ENCODE measurements at regions of chr13 and their contacts with region 1.

Region 1: GRCh38 chr13:97221989-97222700 is at the start of gene MBNL2:
- DNase-seq: peak; percentile 53 to 93 (median 84)
- ATAC-seq: peak; percentile 97
- H3K4me3 ChIP-seq: peak within 1 kb of the TSS; percentile 80
- H3K4me3 Mint-ChIP-seq: peak within 1 kb of the TSS; percentile 88 to 97 (median 95)
- H3K27ac ChIP-seq: peak within 1 kb of the TSS; percentile 81
- H3K27ac Mint-ChIP-seq: peak within 1 kb of the TSS; percentile 89 to 98 (median 94)
- H3K4me1 ChIP-seq: peaks cover 33 to 34% of the 10 kb centered on the region in 2 donors
- H3K4me1 Mint-ChIP-seq: peaks cover 27 to 56% (median 45%) of the 10 kb centered on the region in 7 donors
- H3K27me3 ChIP-seq: no peaks in the 10 kb centered on the region
- H3K27me3 Mint-ChIP-seq: no peaks in the 10 kb centered on the region
- total RNA-seq, gene MBNL2: 13.4 to 28.6 (median 24.6) TPM

Region 2: DNA sequence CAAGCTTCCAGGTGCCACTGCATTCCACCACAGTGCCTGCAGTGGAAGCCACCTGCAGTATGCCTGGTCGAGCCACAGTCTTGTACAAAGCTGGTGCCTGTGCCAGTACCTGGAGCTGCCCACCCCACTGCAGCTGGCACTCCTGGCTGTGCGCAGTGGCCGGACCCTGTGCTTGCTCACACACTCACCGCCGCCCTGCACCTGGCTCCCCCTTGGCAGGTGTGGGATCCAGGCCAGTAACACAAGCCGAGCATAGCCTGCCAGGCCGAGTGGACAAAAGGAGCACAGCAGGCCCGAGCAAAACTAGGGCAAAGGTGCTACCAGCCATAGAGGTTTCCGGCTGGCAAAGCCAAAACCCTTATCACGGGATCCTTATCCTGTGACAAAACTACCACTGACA is 1187.5 kb before region 1 on chr13:
- CTCF ChIA-PET with region 1: no interaction called
- POLR2A ChIA-PET with region 1: no interaction called
- intact Hi-C with region 1: no loop called
- DNase-seq: no peak
- ATAC-seq: no peak
- H3K4me3 ChIP-seq: no peak overlapping the region
- H3K4me3 Mint-ChIP-seq: no peak overlapping the region
- H3K27ac ChIP-seq: no peak overlapping the region
- H3K27ac Mint-ChIP-seq: no peak overlapping the region
- H3K4me1 ChIP-seq: no peaks in the 10 kb centered on the region
- H3K4me1 Mint-ChIP-seq: no peaks in the 10 kb centered on the region
- H3K27me3 ChIP-seq: no peaks in the 10 kb centered on the region
- H3K27me3 Mint-ChIP-seq: peaks cover 0 to 6% (median 0%) of the 10 kb centered on the region in 5 donors

Region 3: GRCh38 chr13:97043302-97043701 is 178.8 kb before region 1 on chr13:
- CTCF ChIA-PET with region 1: no interaction called
- POLR2A ChIA-PET with region 1: no interaction called
- intact Hi-C with region 1: no loop called
- DNase-seq: no peak
- ATAC-seq: no peak
- H3K4me3 ChIP-seq: no peak overlapping the region
- H3K4me3 Mint-ChIP-seq: no peak overlapping the region
- H3K27ac ChIP-seq: no peak overlapping the region
- H3K27ac Mint-ChIP-seq: no peak overlapping the region
- H3K4me1 ChIP-seq: no peaks in the 10 kb centered on the region
- H3K4me1 Mint-ChIP-seq: no peaks in the 10 kb centered on the region
- H3K27me3 ChIP-seq: no peaks in the 10 kb centered on the region
- H3K27me3 Mint-ChIP-seq: peaks cover 3 to 20% (median 15%) of the 10 kb centered on the region in 5 donors

Region 4: DNA sequence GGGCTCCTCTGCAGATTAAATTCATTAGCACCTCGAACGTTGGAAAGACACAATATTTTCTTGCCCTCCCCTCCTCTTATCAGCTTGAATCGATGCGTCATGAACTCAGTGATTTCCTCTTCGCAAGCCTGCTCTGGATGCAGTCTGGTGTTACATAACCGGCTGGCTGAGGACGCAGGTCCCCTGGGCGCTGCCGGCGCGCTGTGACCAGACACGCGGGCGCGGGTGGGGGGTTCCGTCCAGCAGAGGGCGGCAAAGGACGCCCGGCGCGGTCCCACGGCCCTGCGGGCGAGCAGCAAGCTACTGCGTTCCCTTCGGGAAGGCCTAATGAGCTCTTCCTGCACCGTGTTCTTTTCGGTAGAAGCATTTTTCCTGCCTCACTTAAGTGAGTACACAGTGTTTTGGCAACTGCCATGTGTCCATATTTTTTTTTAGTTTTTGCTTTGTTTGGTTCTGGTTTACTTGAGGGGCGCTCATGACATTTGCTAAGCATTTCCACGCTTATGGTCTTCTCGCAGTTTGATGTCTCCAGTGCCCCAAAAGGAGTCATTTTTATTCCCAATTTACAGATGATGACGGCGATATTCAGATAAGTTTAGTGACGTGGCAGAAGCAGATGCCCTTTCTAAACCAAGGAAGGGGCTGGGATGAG is 112.2 kb before region 1 on chr13:
- CTCF ChIA-PET with region 1: interaction called, 5 read pairs
- POLR2A ChIA-PET with region 1: no interaction called
- intact Hi-C with region 1: loop called (anchors 1 to 10 kb)
- DNase-seq: peak; percentile 59 to 85 (median 76)
- ATAC-seq: peak; percentile 97
- H3K4me3 ChIP-seq: no peak overlapping the region
- H3K4me3 Mint-ChIP-seq: peak overlapping the region in 9 of 10 donors; percentile 19 to 71 (median 45)
- H3K27ac ChIP-seq: no peak overlapping the region
- H3K27ac Mint-ChIP-seq: peak overlapping the region in 1 of 9 donors; percentile 68
- H3K4me1 ChIP-seq: peaks cover 3 to 9% of the 10 kb centered on the region in 2 donors
- H3K4me1 Mint-ChIP-seq: peaks cover 7 to 19% (median 15%) of the 10 kb centered on the region in 7 donors
- H3K27me3 ChIP-seq: no peaks in the 10 kb centered on the region
- H3K27me3 Mint-ChIP-seq: peaks cover 8 to 23% (median 19%) of the 10 kb centered on the region in 5 donors

Region 5: DNA sequence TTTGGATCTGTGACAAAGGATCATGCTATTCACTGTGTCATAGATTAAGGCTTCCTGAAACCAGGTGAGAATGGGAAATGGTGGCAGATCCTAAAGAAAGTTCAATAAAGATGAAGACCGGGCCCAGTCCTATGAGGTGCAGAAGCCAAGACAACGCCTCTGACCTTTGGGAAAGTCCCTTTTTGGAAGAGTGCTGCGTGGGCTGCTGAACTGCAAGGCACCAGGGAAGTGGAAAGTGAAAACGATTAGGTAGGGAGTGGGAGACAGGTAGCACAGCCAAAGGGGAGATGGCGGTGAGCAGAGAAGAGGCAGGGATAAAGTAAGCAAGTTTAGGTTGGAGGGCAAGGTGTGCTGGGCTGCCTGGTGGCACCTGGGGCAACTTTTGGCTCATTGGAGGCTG is 16.3 kb after region 1 on chr13:
- CTCF ChIA-PET with region 1: no interaction called
- POLR2A ChIA-PET with region 1: interaction called, 8 read pairs
- intact Hi-C with region 1: loop called in 1 of 2 experiments (anchors 2 kb)
- DNase-seq: no peak
- ATAC-seq: peak; percentile 33
- H3K4me3 ChIP-seq: no peak overlapping the region
- H3K4me3 Mint-ChIP-seq: no peak overlapping the region
- H3K27ac ChIP-seq: no peak overlapping the region
- H3K27ac Mint-ChIP-seq: peak overlapping the region in 1 of 9 donors; percentile 24
- H3K4me1 ChIP-seq: peaks cover 4 to 19% of the 10 kb centered on the region in 2 donors
- H3K4me1 Mint-ChIP-seq: peaks cover 22 to 93% (median 78%) of the 10 kb centered on the region in 7 donors
- H3K27me3 ChIP-seq: no peaks in the 10 kb centered on the region
- H3K27me3 Mint-ChIP-seq: no peaks in the 10 kb centered on the region

Region 6: GRCh38 chr13:97257800-97258799 is 36.0 kb after region 1 on chr13:
- CTCF ChIA-PET with region 1: interaction called, 3 read pairs
- POLR2A ChIA-PET with region 1: no interaction called
- intact Hi-C with region 1: loop called in 1 of 2 experiments (anchors 1 kb)
- DNase-seq: no peak
- ATAC-seq: peak; percentile 43
- H3K4me3 ChIP-seq: no peak overlapping the region
- H3K4me3 Mint-ChIP-seq: peak overlapping the region in 2 of 10 donors; percentile 31 to 57
- H3K27ac ChIP-seq: no peak overlapping the region
- H3K27ac Mint-ChIP-seq: peak overlapping the region in 2 of 9 donors; percentile 43 to 86
- H3K4me1 ChIP-seq: peaks cover 0 to 25% of the 10 kb centered on the region in 2 donors
- H3K4me1 Mint-ChIP-seq: peaks cover 48 to 72% (median 67%) of the 10 kb centered on the region in 7 donors
- H3K27me3 ChIP-seq: no peaks in the 10 kb centered on the region
- H3K27me3 Mint-ChIP-seq: no peaks in the 10 kb centered on the region

Region 7: DNA sequence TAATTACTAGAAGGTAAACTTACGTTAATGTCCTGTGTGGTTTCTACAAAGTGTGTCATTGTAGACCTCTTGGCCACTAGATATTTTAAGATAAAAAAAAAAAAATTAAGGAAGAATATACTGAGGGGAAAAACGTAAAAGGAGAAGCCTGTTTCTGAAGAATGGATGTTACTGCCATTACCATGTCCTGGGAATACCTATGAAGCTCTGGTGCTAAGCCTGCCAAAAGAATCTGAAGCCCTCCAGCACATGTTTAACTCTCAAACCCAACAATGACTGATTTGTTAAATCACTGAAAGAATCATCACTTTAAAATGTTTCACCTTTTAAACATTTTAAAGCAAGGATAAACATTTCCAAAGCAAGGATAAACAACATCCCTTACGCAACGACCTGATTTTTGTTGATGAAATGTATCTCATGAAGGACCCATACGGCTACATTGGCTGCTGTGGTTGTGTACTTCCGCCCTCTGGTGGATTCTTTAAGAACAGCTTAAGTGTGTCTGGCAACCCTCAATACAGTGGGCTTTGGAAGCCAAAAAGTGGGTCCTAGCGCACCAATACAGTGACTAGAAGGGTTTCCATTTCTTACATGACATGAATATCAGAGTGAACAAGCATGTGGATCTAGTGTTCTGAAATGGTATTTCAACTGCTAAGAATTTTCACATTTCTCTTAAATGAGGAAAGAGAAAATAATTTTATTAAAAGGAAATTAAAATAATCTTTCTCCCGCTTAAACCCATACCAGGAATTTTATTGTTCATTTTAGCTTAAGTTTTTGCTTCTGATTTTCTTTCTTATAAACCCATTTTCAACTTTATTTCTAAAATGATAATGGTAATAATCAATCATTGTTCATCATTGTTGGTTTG is 137.3 kb after region 1 on chr13:
- CTCF ChIA-PET with region 1: no interaction called
- POLR2A ChIA-PET with region 1: interaction called, 5 read pairs
- intact Hi-C with region 1: loop called (anchors 2 to 5 kb)
- DNase-seq: peak in 8 of 9 donors; percentile 24 to 64 (median 54)
- ATAC-seq: peak; percentile 97
- H3K4me3 ChIP-seq: no peak overlapping the region
- H3K4me3 Mint-ChIP-seq: no peak overlapping the region
- H3K27ac ChIP-seq: no peak overlapping the region
- H3K27ac Mint-ChIP-seq: peak overlapping the region in 3 of 9 donors; percentile 3 to 46 (median 22)
- H3K4me1 ChIP-seq: no peaks in the 10 kb centered on the region
- H3K4me1 Mint-ChIP-seq: peaks cover 0 to 4% (median 0%) of the 10 kb centered on the region in 7 donors
- H3K27me3 ChIP-seq: no peaks in the 10 kb centered on the region
- H3K27me3 Mint-ChIP-seq: no peaks in the 10 kb centered on the region

Region 8: DNA sequence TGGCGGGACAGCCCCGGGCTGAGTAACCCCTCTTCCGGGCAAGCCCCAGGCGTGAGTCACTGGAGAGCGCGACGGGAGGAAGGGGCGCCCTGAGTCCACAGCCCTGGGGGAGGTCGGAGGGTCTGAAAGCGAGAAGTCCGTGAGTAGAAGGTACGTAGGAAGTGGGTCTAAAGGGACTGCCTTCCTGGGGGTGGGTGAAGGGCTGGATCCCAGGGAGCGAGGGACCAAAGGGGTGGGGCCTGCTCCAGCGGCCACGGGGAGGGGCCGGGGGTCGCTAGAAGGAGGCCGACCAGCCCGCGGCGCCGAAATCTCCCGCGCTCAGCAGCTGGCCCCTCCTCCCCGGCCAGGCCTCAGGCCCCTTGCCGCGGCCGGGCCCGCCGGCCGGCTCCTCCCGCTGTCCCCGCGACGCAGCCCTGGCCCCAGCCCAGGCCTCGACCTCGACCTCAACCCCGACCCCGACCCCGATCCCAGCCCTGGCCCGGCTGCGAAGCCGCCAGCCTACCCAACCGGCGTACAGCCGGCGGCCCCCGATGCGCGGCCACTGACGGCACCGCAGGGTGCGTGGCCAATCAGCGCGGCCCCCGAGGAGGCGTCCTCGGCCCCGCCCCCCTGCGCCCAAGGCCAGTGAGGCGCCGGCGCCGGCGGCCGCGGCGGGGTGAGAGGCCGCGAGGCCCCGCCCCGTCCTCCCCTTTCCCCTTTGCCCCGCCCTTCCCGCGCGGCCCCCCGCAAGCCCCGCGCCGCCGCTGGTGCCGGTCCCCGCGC is 753.9 kb after region 1 on chr13:
- CTCF ChIA-PET with region 1: no interaction called
- POLR2A ChIA-PET with region 1: no interaction called
- intact Hi-C with region 1: loop called (anchors 5 kb)
- DNase-seq: peak; percentile 53 to 94 (median 88)
- ATAC-seq: peak; percentile 97
- H3K4me3 ChIP-seq: peak overlapping the region; percentile 69
- H3K4me3 Mint-ChIP-seq: peak overlapping the region; percentile 88 to 100 (median 96)
- H3K27ac ChIP-seq: peak overlapping the region; percentile 88
- H3K27ac Mint-ChIP-seq: peak overlapping the region; percentile 90 to 98 (median 96)
- H3K4me1 ChIP-seq: peaks cover 12 to 15% of the 10 kb centered on the region in 2 donors
- H3K4me1 Mint-ChIP-seq: peaks cover 17 to 44% (median 38%) of the 10 kb centered on the region in 7 donors
- H3K27me3 ChIP-seq: no peaks in the 10 kb centered on the region
- H3K27me3 Mint-ChIP-seq: peaks cover 0 to 5% (median 0%) of the 10 kb centered on the region in 5 donors

Region 9: DNA sequence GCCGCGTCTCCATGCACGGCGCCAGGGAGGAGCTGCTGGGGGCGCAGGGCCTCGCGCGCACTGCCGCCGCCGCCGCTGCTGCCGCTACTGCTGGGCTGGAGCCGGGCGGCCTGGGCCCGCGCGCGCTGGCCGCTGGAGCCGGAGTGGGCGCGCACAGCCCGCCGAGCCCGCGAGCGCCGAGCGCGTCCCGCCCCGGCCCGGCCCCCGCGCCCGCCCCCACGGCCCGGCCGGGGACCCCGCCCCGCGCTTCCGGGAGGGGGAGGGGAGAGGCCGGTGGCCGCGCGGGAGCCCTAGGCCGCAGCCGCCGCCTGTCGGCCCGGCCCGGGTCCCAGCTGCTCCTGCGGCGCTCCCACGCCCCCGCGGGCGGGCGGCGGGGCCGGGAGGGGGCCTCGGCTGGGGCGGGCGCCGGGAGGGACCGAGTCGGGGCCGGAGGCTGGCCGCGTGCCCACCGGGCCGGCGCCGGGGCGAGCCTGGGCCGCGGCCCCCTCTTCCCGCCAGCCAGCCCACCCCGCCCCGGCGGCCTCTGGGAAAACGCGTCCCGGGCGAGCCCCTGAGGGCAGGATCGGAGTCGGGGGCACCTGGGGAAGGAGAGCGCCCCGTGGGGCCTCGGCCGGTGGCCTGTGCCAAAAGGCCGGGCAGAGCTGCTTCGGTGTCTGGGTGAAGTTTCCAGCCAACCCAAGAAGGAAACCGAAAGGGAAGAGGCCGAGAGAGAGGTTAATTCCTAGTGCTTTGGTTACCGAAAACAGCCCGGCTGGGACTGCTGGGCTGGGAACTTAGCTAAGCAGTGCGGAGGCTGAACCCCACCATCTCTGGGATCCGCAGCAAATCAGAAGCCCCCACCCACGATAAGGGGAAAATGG is 1355.0 kb after region 1 on chr13 and contains the start of gene STK24:
- CTCF ChIA-PET with region 1: no interaction called
- POLR2A ChIA-PET with region 1: no interaction called
- intact Hi-C with region 1: loop called in 1 of 2 experiments (anchors 10 kb)
- DNase-seq: peak in 5 of 9 donors; percentile 34 to 87 (median 66)
- ATAC-seq: peak; percentile 85
- H3K4me3 ChIP-seq: peak within 1 kb of the TSS; percentile 72
- H3K4me3 Mint-ChIP-seq: peak within 1 kb of the TSS; percentile 84 to 99 (median 93)
- H3K27ac ChIP-seq: peak within 1 kb of the TSS; percentile 85
- H3K27ac Mint-ChIP-seq: peak within 1 kb of the TSS; percentile 84 to 96 (median 93)
- H3K4me1 ChIP-seq: peaks cover 26 to 35% of the 10 kb centered on the region in 2 donors
- H3K4me1 Mint-ChIP-seq: peaks cover 35 to 48% (median 37%) of the 10 kb centered on the region in 7 donors
- H3K27me3 ChIP-seq: no peaks in the 10 kb centered on the region
- H3K27me3 Mint-ChIP-seq: no peaks in the 10 kb centered on the region
- total RNA-seq, gene STK24: 90.1 to 148 (median 121) TPM